ENCODE measurements at regions of chr2 and their contacts with region 1.

Region 1: GRCh38 chr2:158753641-158754611 is 41.2 kb upstream of the DAPL1 start:
- DNase-seq: peak; percentile 17 to 56
- H3K4me3 ChIP-seq: peak overlapping the region in 1 of 4 experiments; percentile 39; a peak in 1 of 8 replicates
- H3K27ac ChIP-seq: no peak overlapping the region
- H3K4me1 ChIP-seq: peaks cover 0 to 2% (median 0%) of the 10 kb centered on the region in 4 experiments; a peak in 1 of 7 replicates
- H3K27me3 ChIP-seq: no peaks in the 10 kb centered on the region
- CTCF ChIP-seq: peak; percentile 50 to 88 (median 88)
- EP300 ChIP-seq: no peak
- POLR2A ChIP-seq: no peak
- RAD21 ChIP-seq: peak; percentile 87 to 89

Region 2: DNA sequence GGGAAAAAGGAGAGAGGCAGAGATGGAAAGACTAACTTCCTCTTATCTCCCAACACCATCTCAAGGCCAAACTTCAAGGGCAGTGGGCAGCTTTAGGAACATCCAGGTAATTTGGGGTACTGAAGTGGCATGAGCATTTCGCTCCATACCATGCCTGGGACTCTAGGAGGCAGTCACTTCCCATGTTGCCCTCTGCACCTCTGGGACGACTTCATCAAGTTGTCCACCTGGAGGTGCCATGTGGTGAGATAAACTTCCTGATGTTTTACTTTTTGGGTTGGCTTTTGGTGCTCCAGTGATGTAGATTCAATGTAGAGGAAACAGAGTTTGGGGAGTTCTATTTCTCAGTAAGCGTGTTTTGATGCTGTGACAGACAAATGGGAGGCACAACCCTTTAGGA is 708.6 kb before region 1 on chr2:
- CTCF ChIA-PET with region 1: interaction called, 18 read pairs
- POLR2A ChIA-PET with region 1: no interaction called
- DNase-seq: no peak
- H3K4me3 ChIP-seq: no peak overlapping the region
- H3K27ac ChIP-seq: no peak overlapping the region
- H3K4me1 ChIP-seq: no peaks in the 10 kb centered on the region
- H3K27me3 ChIP-seq: no peaks in the 10 kb centered on the region
- CTCF ChIP-seq: peak; percentile 77 to 98 (median 90)
- EP300 ChIP-seq: no peak
- POLR2A ChIP-seq: no peak
- RAD21 ChIP-seq: peak; percentile 86 to 93

Region 3: DNA sequence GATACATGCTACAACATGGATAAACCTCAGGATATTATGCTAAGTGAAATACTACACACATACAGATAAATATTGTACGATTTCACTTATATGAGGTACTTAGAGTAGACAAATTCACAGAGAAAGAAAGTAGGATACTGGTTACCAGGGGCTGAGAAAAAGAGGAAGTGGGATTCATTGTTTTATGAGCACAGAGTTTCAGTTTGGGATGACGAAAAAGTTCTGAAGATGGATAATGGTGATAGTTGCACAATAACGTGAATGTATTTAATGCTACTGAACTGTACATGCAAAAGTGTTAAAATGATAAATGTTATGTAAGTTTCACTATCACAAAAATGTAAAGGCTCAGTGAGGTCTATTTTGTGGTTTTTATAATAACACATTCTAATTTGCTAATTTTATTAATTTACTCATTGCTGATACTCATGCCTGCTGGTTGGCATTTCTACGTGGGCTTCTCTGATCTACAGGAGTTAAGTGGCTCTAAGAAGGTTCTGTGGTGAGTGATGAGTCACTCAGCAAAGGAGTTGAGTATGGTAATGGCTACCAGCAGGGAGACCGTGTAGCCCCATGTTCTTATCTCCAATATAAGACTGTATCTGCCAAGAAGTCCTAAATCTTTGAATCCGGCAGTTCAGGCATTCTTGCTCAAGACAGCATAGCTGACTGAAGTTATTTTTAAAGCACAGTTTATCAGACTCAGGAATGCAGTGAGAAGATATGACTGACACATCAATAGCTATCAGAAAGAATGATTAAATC is 611.2 kb before region 1 on chr2:
- CTCF ChIA-PET with region 1: no interaction called
- POLR2A ChIA-PET with region 1: no interaction called
- DNase-seq: no peak
- H3K4me3 ChIP-seq: no peak overlapping the region
- H3K27ac ChIP-seq: no peak overlapping the region
- H3K4me1 ChIP-seq: no peaks in the 10 kb centered on the region
- H3K27me3 ChIP-seq: no peaks in the 10 kb centered on the region
- CTCF ChIP-seq: no peak
- EP300 ChIP-seq: no peak
- POLR2A ChIP-seq: no peak
- RAD21 ChIP-seq: no peak

Region 4: DNA sequence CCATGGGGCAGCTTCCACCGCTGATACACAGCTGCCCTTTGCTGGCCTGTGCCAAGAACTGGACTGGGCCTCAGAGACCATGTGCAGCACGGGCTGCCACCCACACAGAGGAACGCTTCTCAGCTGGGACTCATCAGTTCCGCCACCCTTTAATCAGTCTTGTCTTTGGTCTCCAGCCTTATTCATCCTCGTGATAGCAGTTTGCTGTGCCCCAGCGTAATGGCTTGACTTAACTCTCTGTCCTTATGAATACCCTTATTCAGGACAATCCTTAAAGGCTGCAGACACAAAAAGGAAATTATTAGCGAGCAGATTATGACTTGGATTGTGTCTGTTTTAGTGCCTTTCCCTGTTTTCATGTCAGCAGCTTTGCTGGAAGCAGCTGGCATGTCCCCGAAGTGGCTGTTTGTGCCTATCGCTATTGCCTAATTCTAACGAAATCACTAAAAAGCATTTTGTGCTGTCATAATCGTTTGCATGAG is 67.7 kb before region 1 on chr2:
- CTCF ChIA-PET with region 1: interaction called, 27 read pairs
- POLR2A ChIA-PET with region 1: no interaction called
- DNase-seq: no peak
- H3K4me3 ChIP-seq: no peak overlapping the region
- H3K27ac ChIP-seq: no peak overlapping the region
- H3K4me1 ChIP-seq: no peaks in the 10 kb centered on the region; a peak in 2 of 7 replicates
- H3K27me3 ChIP-seq: no peaks in the 10 kb centered on the region
- CTCF ChIP-seq: no peak
- EP300 ChIP-seq: no peak
- POLR2A ChIP-seq: no peak
- RAD21 ChIP-seq: no peak

Region 5: GRCh38 chr2:158723917-158724690 is 29.8 kb before region 1 on chr2:
- CTCF ChIA-PET with region 1: interaction called, 416 read pairs
- POLR2A ChIA-PET with region 1: no interaction called
- DNase-seq: peak; percentile 10 to 75
- H3K4me3 ChIP-seq: no peak overlapping the region
- H3K27ac ChIP-seq: peak overlapping the region; percentile 29; the same call in 1 of the 2 replicates
- H3K4me1 ChIP-seq: peaks cover 0 to 6% (median 2%) of the 10 kb centered on the region in 4 experiments; a peak in 1 of 7 replicates
- H3K27me3 ChIP-seq: no peaks in the 10 kb centered on the region
- CTCF ChIP-seq: peak; percentile 62 to 96 (median 88)
- EP300 ChIP-seq: no peak
- POLR2A ChIP-seq: no peak
- RAD21 ChIP-seq: peak; percentile 50 to 62; a peak in 3 of 4 replicates

Region 6: DNA sequence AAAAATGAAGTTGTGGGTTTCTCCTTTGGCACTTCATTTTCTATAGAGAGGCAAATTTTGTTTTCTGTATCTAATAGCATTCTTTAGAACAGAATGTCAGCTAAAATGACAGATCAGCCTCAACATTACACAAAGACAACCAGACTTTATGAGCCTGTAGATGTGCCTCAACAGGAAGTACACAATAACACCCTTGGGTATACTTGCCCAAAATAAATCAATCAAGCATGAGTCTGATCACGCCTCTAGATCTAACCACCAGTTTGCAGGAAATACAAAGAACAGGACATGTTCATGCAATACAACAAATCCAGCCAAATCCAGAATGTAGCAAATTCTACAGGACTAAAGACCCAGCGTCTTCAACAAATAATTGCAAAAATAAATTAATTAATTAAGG is 30.0 kb after region 1 on chr2:
- CTCF ChIA-PET with region 1: interaction called, 12 read pairs
- POLR2A ChIA-PET with region 1: no interaction called
- DNase-seq: no peak
- H3K4me3 ChIP-seq: no peak overlapping the region
- H3K27ac ChIP-seq: no peak overlapping the region
- H3K4me1 ChIP-seq: peaks cover 0 to 5% (median 1%) of the 10 kb centered on the region in 4 experiments; a peak in 1 of 7 replicates
- H3K27me3 ChIP-seq: no peaks in the 10 kb centered on the region
- CTCF ChIP-seq: no peak
- EP300 ChIP-seq: no peak
- POLR2A ChIP-seq: no peak
- RAD21 ChIP-seq: no peak

Measured in H1 (cell line).